Activated B cell treated with CpG ODN at 0.5 μM for 24 hours (primary cell): ENCODE measurements at regions of chr9 and their contacts with region 1.

Region 1: GRCh38 chr9:136991993-136992818 is at the start of gene PAXX:
- DNase-seq: peak; percentile 94
- ATAC-seq: peak; percentile 91
- H3K4me3 Mint-ChIP-seq: peak within 1 kb of the TSS; percentile 86
- H3K27ac Mint-ChIP-seq: peak within 1 kb of the TSS; percentile 84
- H3K4me1 Mint-ChIP-seq: peaks cover 33% of the 10 kb centered on the region
- H3K27me3 Mint-ChIP-seq: peaks cover 6% of the 10 kb centered on the region
- CTCF ChIP-seq: no peak
- total RNA-seq, gene PAXX: 43.4 and 47.8 TPM in 2 replicates

Region 2: DNA sequence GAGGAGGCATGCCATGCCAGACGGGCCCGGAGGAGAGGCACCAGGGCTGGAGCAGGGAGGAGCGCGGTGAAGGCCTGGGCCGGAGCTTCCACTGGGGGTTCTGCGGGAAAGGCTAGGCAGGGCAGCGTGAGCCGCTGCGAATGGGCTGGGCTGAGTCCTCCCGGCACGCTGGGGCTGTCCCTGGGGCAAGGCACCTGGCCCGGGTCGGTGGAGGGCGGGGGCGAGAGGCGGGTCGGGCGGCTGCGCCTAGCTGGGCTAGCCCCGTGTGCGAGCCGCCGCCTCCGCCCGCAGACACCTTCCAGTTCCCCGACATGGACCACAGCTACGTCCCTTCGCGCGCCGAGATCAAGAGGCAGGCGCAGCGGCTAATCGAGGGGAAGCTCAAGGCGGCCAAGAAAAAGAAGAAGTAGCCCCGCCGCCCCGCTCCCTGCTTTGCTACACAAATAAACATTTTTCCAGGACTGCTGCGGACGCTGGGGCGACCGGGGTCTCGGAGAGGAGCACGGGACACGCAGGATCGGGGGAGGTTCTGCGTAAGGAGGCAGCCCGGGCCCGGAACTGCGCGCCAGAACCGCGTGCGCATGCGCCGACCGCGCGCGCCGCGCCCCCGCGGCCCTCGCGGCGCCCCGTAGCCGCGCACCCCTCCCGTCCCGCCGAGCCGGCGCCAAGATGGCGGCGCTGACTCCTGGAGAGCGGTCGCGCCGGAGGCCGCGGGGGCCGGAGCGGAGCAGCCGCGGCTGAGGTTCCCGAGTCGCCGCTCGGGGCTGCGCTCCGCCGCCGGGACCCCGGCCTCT is 184.7 kb before region 1 on chr9 and contains the start of gene RABL6:
- CTCF ChIA-PET with region 1: no interaction called
- POLR2A ChIA-PET with region 1: interaction called, 11 read pairs
- intact Hi-C with region 1: loop called (anchors 5 kb)
- DNase-seq: peak; percentile 86
- ATAC-seq: peak; percentile 87
- H3K4me3 Mint-ChIP-seq: peak within 1 kb of the TSS; percentile 88
- H3K27ac Mint-ChIP-seq: peak within 1 kb of the TSS; percentile 87
- H3K4me1 Mint-ChIP-seq: peaks cover 31% of the 10 kb centered on the region
- H3K27me3 Mint-ChIP-seq: no peaks in the 10 kb centered on the region
- CTCF ChIP-seq: no peak
- total RNA-seq, gene RABL6: 70.1 and 75.0 TPM in 2 replicates

Region 3: GRCh38 chr9:136885950-136886578 is 106.1 kb before region 1 on chr9 and contains the start of gene TRAF2:
- CTCF ChIA-PET with region 1: no interaction called
- POLR2A ChIA-PET with region 1: interaction called, 16 read pairs
- intact Hi-C with region 1: no loop called
- DNase-seq: peak; percentile 95
- ATAC-seq: peak; percentile 89
- H3K4me3 Mint-ChIP-seq: peak within 1 kb of the TSS; percentile 91
- H3K27ac Mint-ChIP-seq: peak within 1 kb of the TSS; percentile 88
- H3K4me1 Mint-ChIP-seq: peaks cover 44% of the 10 kb centered on the region
- H3K27me3 Mint-ChIP-seq: no peaks in the 10 kb centered on the region
- CTCF ChIP-seq: no peak
- total RNA-seq, gene TRAF2: 49.7 and 58.2 TPM in 2 replicates

Region 4: GRCh38 chr9:136949817-136950655 is 42.2 kb before region 1 on chr9:
- CTCF ChIA-PET with region 1: interaction called, 4 read pairs
- POLR2A ChIA-PET with region 1: interaction called, 15 read pairs
- intact Hi-C with region 1: no loop called
- DNase-seq: peak; percentile 94
- ATAC-seq: peak; percentile 96
- H3K4me3 Mint-ChIP-seq: peak overlapping the region; percentile 82
- H3K27ac Mint-ChIP-seq: peak overlapping the region; percentile 86
- H3K4me1 Mint-ChIP-seq: peaks cover 5% of the 10 kb centered on the region
- H3K27me3 Mint-ChIP-seq: no peaks in the 10 kb centered on the region
- CTCF ChIP-seq: no peak

Region 5: GRCh38 chr9:137029058-137029936 is 37.1 kb after region 1 on chr9:
- CTCF ChIA-PET with region 1: interaction called, 11 read pairs
- POLR2A ChIA-PET with region 1: interaction called, 10 read pairs
- intact Hi-C with region 1: loop called (anchors 2 kb)
- DNase-seq: peak; percentile 76
- ATAC-seq: peak; percentile 27
- H3K4me3 Mint-ChIP-seq: peak overlapping the region; percentile 78
- H3K27ac Mint-ChIP-seq: peak overlapping the region; percentile 73
- H3K4me1 Mint-ChIP-seq: peaks cover 67% of the 10 kb centered on the region
- H3K27me3 Mint-ChIP-seq: no peaks in the 10 kb centered on the region
- CTCF ChIP-seq: peak; percentile 36

Region 6: DNA sequence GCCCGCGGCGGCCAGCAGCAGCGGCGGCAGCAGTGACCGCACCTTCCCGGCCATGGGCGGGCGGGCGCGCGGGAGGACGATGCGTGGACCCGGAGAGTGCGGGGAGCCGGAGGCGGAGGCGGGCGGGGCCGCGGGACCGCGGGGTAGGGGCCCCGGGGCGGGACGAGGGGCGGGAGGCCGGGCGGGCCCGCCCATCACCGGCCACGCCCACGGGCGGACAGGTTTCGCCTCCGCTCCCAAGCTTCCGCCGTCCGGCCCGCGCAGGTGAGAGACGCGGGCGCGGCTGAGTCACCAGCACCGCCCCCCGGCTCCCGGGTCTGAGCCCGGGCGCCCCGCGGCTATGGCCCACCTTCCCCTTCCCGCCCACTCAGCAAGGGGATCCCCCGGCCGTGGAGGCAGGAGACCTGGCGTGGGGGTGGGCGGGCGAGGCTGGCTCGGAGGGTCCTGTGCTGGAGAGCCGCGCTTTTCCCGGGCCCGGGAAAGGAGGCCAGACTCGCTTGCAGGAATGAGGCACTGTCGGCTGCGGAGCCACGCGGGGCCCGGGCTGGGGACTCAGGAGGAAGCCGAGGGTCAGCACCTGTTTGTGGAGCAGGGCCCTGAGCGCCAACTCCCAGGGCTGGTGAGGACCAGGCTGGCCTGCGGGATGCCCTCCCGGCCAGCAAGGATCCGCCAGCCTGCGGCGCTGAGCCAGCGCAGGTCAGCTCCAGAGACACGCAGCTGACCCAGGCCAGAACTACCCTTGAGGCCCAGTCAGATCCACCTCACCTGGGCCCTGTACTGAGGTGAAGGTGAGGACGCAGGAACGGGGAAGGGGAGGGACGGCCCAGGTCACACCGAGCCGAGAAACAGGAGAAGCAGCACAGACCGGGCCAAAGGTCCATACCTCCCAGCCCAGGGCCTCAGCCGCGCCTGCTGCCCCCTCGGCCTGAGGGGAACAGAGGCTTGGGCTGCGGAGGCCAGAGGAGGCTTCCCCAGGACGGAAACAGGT is 62.0 kb after region 1 on chr9 and contains the start of gene ENTPD2:
- CTCF ChIA-PET with region 1: no interaction called
- POLR2A ChIA-PET with region 1: no interaction called
- intact Hi-C with region 1: no loop called
- DNase-seq: peak; percentile 36
- ATAC-seq: peak; percentile 70
- H3K4me3 Mint-ChIP-seq: no peak within 1 kb of the TSS
- H3K27ac Mint-ChIP-seq: no peak within 1 kb of the TSS
- H3K4me1 Mint-ChIP-seq: peaks cover 3% of the 10 kb centered on the region
- H3K27me3 Mint-ChIP-seq: peaks cover 16% of the 10 kb centered on the region
- CTCF ChIP-seq: no peak
- total RNA-seq, gene ENTPD2: not detected in 2 replicates

Region 7: GRCh38 chr9:137797206-137798120 is 805.3 kb after region 1 on chr9:
- CTCF ChIA-PET with region 1: no interaction called
- POLR2A ChIA-PET with region 1: no interaction called
- intact Hi-C with region 1: no loop called
- DNase-seq: no peak
- ATAC-seq: no peak
- H3K4me3 Mint-ChIP-seq: no peak overlapping the region
- H3K27ac Mint-ChIP-seq: no peak overlapping the region
- H3K4me1 Mint-ChIP-seq: no peaks in the 10 kb centered on the region
- H3K27me3 Mint-ChIP-seq: no peaks in the 10 kb centered on the region
- CTCF ChIP-seq: no peak